HCT116 (cell line): ENCODE measurements at regions of chr3 and their contacts with region 1.

Region 1: DNA sequence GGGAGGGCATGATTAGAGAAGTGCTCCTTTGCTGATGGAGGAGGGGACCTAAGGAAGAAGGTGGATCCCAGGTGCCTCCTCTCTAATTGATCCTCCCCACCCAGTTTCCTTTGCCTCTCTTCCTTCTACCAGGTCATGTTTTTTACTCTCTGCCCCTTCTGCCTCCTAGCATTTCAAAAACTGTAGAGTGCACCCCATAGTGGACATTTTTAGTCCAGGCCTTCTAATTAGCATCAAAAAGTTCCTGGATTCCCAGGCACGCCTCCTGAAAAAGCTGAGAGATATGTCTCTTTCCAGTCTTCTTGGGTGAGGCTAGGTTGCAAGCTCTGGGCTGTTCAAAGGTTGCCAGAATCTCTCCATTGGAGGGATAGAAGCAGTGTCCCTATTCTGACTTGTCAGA is 18.7 kb upstream of the ITGB5 start:
- DNase-seq: no peak
- ATAC-seq: peak; percentile 46
- H3K4me3 ChIP-seq: no peak overlapping the region
- H3K27ac ChIP-seq: no peak overlapping the region
- H3K4me1 ChIP-seq: peaks cover 0 to 8% of the 10 kb centered on the region in 2 experiments; a peak in 2 of 4 replicates
- H3K27me3 ChIP-seq: peaks cover 4% of the 10 kb centered on the region
- CTCF ChIP-seq: 0 out of 6 replicates have a peak, but pooled peaks have one; percentile 6 to 18 (median 10)
- POLR2A ChIP-seq: no peak
- RAD21 ChIP-seq: peak; percentile 26; the same call in 1 of the 2 replicates

Region 2: GRCh38 chr3:124260206-124260915 is 645.5 kb before region 1 on chr3:
- CTCF ChIA-PET with region 1: no interaction called
- POLR2A ChIA-PET with region 1: no interaction called
- RAD21 ChIA-PET with region 1: no interaction called
- intact Hi-C with region 1: no loop called
- DNase-seq: no peak
- ATAC-seq: no peak; the same call in 1 of the 2 replicates
- H3K4me3 ChIP-seq: no peak overlapping the region
- H3K27ac ChIP-seq: no peak overlapping the region
- H3K4me1 ChIP-seq: peaks cover 0 to 10% of the 10 kb centered on the region in 2 experiments; a peak in 2 of 4 replicates
- H3K27me3 ChIP-seq: peaks cover 6% of the 10 kb centered on the region; the same call in 1 of the 2 replicates
- CTCF ChIP-seq: no peak
- POLR2A ChIP-seq: no peak
- RAD21 ChIP-seq: no peak

Region 3: DNA sequence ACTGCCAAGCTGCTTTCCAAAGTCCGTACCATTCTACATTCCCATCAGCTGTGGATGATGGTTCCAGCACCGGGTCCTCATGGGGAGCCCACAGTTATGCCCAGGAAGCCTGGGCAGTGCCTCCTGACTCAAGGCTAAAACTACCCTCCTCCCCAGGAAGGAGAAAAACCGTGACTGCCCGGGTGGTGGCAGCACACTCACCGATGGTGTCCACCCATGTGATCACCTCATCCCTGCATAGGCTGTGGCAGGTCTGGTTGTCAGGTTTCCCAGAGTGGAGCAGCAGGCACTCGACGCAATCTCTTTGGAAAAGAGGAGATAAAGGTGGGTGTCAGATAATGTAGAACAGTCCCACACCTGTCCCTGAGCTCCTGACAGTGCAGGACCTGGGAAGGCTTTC is 137.0 kb before region 1 on chr3:
- CTCF ChIA-PET with region 1: interaction called, 35 read pairs
- POLR2A ChIA-PET with region 1: no interaction called
- RAD21 ChIA-PET with region 1: interaction called in 1 of 2 experiments, 3 read pairs
- intact Hi-C with region 1: loop called (anchors 2 kb)
- DNase-seq: no peak
- ATAC-seq: peak; percentile 98
- H3K4me3 ChIP-seq: no peak overlapping the region
- H3K27ac ChIP-seq: no peak overlapping the region
- H3K4me1 ChIP-seq: peaks cover 0 to 5% of the 10 kb centered on the region in 2 experiments; a peak in 1 of 4 replicates
- H3K27me3 ChIP-seq: no peaks in the 10 kb centered on the region
- CTCF ChIP-seq: peak; percentile 51 to 73 (median 63); a peak in 5 of 6 replicates
- POLR2A ChIP-seq: no peak
- RAD21 ChIP-seq: peak; percentile 65

Region 4: GRCh38 chr3:124786441-124787241 is 119.2 kb before region 1 on chr3:
- CTCF ChIA-PET with region 1: interaction called, 98 read pairs
- POLR2A ChIA-PET with region 1: interaction called, 7 read pairs
- RAD21 ChIA-PET with region 1: interaction called, 13 to 21 read pairs
- intact Hi-C with region 1: loop called (anchors 1 kb)
- DNase-seq: peak; percentile 8
- ATAC-seq: peak; percentile 49
- H3K4me3 ChIP-seq: no peak overlapping the region
- H3K27ac ChIP-seq: peak overlapping the region; percentile 1; the same call in 1 of the 2 replicates
- H3K4me1 ChIP-seq: peaks cover 11% of the 10 kb centered on the region in 2 experiments; a peak in 3 of 4 replicates
- H3K27me3 ChIP-seq: no peaks in the 10 kb centered on the region
- CTCF ChIP-seq: peak; percentile 13 to 70 (median 63); a peak in 4 of 6 replicates
- POLR2A ChIP-seq: no peak
- RAD21 ChIP-seq: peak; percentile 83

Region 5: GRCh38 chr3:125011941-125012340 is 106.1 kb after region 1 on chr3:
- CTCF ChIA-PET with region 1: no interaction called
- POLR2A ChIA-PET with region 1: no interaction called
- RAD21 ChIA-PET with region 1: no interaction called
- intact Hi-C with region 1: no loop called
- DNase-seq: no peak
- ATAC-seq: no peak
- H3K4me3 ChIP-seq: no peak overlapping the region
- H3K27ac ChIP-seq: no peak overlapping the region
- H3K4me1 ChIP-seq: no peaks in the 10 kb centered on the region
- H3K27me3 ChIP-seq: no peaks in the 10 kb centered on the region
- CTCF ChIP-seq: no peak
- POLR2A ChIP-seq: no peak
- RAD21 ChIP-seq: no peak

Region 6: GRCh38 chr3:125322166-125322565 is 416.3 kb after region 1 on chr3:
- CTCF ChIA-PET with region 1: no interaction called
- POLR2A ChIA-PET with region 1: no interaction called
- RAD21 ChIA-PET with region 1: no interaction called
- intact Hi-C with region 1: no loop called
- DNase-seq: no peak
- ATAC-seq: no peak
- H3K4me3 ChIP-seq: no peak overlapping the region
- H3K27ac ChIP-seq: no peak overlapping the region
- H3K4me1 ChIP-seq: peaks cover 0 to 11% of the 10 kb centered on the region in 2 experiments; a peak in 1 of 4 replicates
- H3K27me3 ChIP-seq: no peaks in the 10 kb centered on the region
- CTCF ChIP-seq: no peak
- POLR2A ChIP-seq: no peak
- RAD21 ChIP-seq: no peak